ENCODE measurements at regions of chr2 and their contacts with region 1.

Region 1: GRCh38 chr2:55268907-55269644 is at the start of gene MTIF2:
- DNase-seq: peak; percentile 93
- H3K4me3 Mint-ChIP-seq: peak within 1 kb of the TSS; percentile 89
- H3K27ac Mint-ChIP-seq: peak within 1 kb of the TSS; percentile 93
- H3K4me1 Mint-ChIP-seq: peaks cover 14% of the 10 kb centered on the region
- H3K27me3 Mint-ChIP-seq: no peaks in the 10 kb centered on the region
- total RNA-seq, gene MTIF2: 43.9 to 44.2 TPM

Region 2: GRCh38 chr2:55223958-55224760 is 44.9 kb before region 1 on chr2:
- CTCF ChIA-PET with region 1: no interaction called
- intact Hi-C with region 1: loop called (anchors 2 kb)
- DNase-seq: no peak
- H3K4me3 Mint-ChIP-seq: peak overlapping the region; percentile 71
- H3K27ac Mint-ChIP-seq: peak overlapping the region; percentile 68
- H3K4me1 Mint-ChIP-seq: peaks cover 36% of the 10 kb centered on the region
- H3K27me3 Mint-ChIP-seq: no peaks in the 10 kb centered on the region

Region 3: DNA sequence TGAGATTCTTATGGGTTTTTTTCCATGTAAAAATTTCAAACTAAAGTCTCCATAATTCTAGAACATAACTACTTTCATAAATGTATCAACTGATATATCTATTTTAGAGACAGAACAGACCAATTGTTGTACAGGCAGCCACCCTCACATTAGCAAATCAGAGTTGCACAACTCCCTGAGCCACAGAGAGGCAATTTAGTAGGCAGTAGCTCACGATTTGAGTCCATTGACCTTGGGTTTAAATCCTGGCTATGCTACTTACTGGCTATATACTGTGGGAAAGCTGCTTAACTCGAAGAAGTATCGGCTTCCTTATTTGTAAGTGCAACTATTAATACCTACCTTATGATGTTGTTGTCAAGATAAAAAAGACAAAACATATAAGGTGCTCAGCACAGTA is 16.2 kb before region 1 on chr2:
- CTCF ChIA-PET with region 1: no interaction called
- intact Hi-C with region 1: loop called (anchors 2 kb)
- DNase-seq: no peak
- H3K4me3 Mint-ChIP-seq: no peak overlapping the region
- H3K27ac Mint-ChIP-seq: no peak overlapping the region
- H3K4me1 Mint-ChIP-seq: peaks cover 1% of the 10 kb centered on the region
- H3K27me3 Mint-ChIP-seq: no peaks in the 10 kb centered on the region

Region 4: GRCh38 chr2:55311444-55311870 is 42.4 kb after region 1 on chr2:
- CTCF ChIA-PET with region 1: interaction called, 3 read pairs
- intact Hi-C with region 1: loop called (anchors 1 kb)
- DNase-seq: peak; percentile 63
- H3K4me3 Mint-ChIP-seq: no peak overlapping the region
- H3K27ac Mint-ChIP-seq: peak overlapping the region; percentile 57
- H3K4me1 Mint-ChIP-seq: peaks cover 25% of the 10 kb centered on the region
- H3K27me3 Mint-ChIP-seq: no peaks in the 10 kb centered on the region

Region 5: DNA sequence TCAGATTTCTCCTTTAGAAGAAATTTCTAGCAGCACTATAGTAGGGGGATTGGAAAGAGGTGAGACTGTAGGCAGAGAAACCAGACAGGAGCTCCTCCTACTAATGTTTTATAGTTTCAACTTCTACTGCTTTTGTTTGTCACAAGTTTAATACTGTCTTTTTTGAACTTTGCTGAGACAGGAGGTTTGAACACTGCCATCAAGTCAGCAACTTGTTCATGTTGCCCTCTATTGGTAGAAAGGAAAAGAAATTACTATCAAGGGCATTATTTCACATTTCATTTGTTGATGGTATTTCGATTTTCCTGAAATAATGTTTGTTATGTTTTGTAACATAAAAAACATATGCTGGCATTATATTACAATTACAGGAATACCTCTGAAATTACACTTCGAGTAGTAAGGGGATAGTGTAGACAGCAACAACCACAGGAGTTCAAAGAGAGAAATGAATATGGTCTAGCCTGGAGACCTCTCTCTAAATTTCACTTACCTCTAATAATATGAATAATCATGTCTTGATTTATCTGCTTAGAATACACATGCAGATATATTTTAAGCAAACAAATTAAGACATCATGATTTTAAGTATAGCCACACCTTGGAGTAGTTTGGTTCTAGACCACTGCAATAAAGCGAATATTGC is 163.0 kb after region 1 on chr2:
- CTCF ChIA-PET with region 1: interaction called, 7 read pairs
- intact Hi-C with region 1: loop called (anchors 1 kb)
- DNase-seq: no peak
- H3K4me3 Mint-ChIP-seq: no peak overlapping the region
- H3K27ac Mint-ChIP-seq: no peak overlapping the region
- H3K4me1 Mint-ChIP-seq: peaks cover 3% of the 10 kb centered on the region
- H3K27me3 Mint-ChIP-seq: no peaks in the 10 kb centered on the region

Region 6: DNA sequence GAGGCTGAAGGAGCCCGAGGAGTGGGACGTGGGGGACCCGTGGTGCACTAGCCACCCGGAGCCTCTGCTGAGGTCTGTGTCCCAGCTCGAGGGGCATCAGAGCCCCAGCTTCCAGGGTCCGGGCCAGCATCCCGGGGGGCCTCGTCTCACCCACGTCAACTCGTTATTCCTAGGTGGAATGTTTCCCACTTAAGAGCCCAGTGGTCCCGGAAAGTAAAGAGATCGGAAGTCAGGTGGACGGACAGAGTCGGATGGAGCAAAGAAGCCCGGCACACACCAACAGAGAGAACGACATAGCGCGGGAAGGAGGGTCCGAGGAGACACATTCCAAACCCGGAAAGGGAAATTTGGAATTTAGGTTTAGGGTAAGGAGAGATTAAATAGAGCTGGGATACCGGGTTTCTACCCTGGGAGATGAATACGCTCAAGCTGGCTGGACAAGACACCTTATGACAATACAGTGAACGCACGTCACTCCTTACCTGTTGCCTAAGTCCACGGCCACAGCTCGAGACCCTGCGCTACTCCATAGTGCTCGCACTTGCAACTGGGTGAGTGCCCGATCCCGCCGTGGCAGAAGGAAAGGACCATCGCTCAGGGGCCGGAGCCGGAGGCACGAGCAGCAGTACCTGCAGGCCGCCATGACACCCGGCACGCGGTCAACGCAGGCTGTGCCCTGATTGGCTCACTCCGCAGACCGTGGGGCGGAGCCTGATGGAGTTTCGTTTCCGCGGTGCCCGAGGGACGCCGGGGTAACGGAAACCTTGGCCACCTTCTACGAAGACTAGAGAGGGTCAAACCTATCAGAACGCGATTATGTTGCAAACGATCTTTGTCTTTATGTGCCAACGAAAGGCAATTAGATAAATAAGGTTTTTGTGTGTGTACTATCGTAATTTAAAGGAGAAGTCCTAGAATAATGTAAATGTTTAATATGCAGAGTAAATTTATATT is 424.4 kb after region 1 on chr2 and contains the start of gene PNPT1:
- CTCF ChIA-PET with region 1: no interaction called
- intact Hi-C with region 1: loop called (anchors 1 kb)
- DNase-seq: peak; percentile 96
- H3K4me3 Mint-ChIP-seq: peak within 1 kb of the TSS; percentile 92
- H3K27ac Mint-ChIP-seq: peak within 1 kb of the TSS; percentile 86
- H3K4me1 Mint-ChIP-seq: peaks cover 34% of the 10 kb centered on the region
- H3K27me3 Mint-ChIP-seq: no peaks in the 10 kb centered on the region
- total RNA-seq, gene PNPT1: 54.1 to 60.7 TPM

Measured in activated naive CD4-positive, alpha-beta T cell treated with anti-CD3 and anti-CD28 coated beads for 36 hours (primary cell).